HepG2 (cell line): ENCODE measurements at regions of chr20 and their contacts with region 1.

Region 1: DNA sequence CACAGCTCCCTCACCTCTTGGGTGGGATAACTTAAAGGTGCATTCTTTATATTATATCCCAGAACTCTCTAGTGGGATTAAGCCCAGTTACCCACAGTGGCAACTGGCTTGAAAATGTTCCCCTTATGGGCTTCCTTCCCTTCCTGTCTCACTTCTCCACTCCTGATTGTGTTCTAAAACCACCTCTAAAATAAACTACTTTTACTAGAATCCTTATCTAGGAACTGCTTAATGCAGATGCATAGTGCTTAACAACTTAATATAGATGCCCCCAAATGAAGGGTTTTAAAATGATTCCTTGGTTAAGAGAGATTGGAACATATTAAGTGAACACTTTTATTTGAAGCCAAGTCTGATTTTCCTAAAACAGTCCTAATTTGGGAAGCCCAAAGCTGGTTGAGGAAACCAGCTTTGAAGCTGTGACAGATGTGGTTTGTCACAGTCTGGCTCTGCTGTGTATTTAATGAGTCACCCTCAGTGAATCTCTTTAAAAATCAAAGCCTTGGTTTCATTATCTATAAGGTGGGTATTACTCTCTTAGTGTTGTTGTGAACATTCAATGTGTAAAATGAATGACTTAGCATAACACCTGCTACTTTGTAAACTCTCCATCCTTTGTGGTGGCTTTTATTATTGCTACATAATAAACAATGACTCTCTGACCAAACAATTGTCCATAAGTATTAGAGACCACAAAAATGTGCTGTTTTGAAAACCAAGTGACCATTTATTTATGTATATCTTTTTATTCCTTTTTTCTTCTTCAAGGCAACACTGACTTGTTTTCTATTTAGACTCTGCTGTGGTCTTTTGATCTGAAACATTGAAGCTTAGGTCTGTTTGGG is 24.4 kb downstream of the PLCB1 start:
- DNase-seq: peak; percentile 90
- ATAC-seq: peak; percentile 95
- H3K4me3 ChIP-seq: no peak overlapping the region; a peak in 1 of 6 replicates
- H3K27ac ChIP-seq: peak overlapping the region; percentile 59
- H3K4me1 ChIP-seq: peaks cover 54% of the 10 kb centered on the region
- H3K27me3 ChIP-seq: no peaks in the 10 kb centered on the region
- CTCF ChIP-seq: no peak
- EP300 ChIP-seq: peak; percentile 40 to 90; a peak in 2 of 4 replicates
- POLR2A ChIP-seq: no peak
- RAD21 ChIP-seq: no peak

Region 2: GRCh38 chr20:8019246-8019997 is 137.0 kb before region 1 on chr20 and contains the start of gene TMX4:
- CTCF ChIA-PET with region 1: no interaction called
- POLR2A ChIA-PET with region 1: no interaction called
- in situ Hi-C with region 1: no loop called
- intact Hi-C with region 1: no loop called
- DNase-seq: peak; percentile 98
- ATAC-seq: peak; percentile 92
- H3K4me3 ChIP-seq: peak within 1 kb of the TSS; percentile 74 to 89 (median 87)
- H3K27ac ChIP-seq: peak within 1 kb of the TSS; percentile 94
- H3K4me1 ChIP-seq: peaks cover 19% of the 10 kb centered on the region
- H3K27me3 ChIP-seq: no peaks in the 10 kb centered on the region
- CTCF ChIP-seq: peak; percentile 76
- EP300 ChIP-seq: peak; percentile 32 to 85; a peak in 3 of 4 replicates
- POLR2A ChIP-seq: peak; percentile 97 to 99
- RAD21 ChIP-seq: peak; percentile 90
- total RNA-seq, gene TMX4: 15.4 and 21.4 TPM in 2 replicates

Region 3: DNA sequence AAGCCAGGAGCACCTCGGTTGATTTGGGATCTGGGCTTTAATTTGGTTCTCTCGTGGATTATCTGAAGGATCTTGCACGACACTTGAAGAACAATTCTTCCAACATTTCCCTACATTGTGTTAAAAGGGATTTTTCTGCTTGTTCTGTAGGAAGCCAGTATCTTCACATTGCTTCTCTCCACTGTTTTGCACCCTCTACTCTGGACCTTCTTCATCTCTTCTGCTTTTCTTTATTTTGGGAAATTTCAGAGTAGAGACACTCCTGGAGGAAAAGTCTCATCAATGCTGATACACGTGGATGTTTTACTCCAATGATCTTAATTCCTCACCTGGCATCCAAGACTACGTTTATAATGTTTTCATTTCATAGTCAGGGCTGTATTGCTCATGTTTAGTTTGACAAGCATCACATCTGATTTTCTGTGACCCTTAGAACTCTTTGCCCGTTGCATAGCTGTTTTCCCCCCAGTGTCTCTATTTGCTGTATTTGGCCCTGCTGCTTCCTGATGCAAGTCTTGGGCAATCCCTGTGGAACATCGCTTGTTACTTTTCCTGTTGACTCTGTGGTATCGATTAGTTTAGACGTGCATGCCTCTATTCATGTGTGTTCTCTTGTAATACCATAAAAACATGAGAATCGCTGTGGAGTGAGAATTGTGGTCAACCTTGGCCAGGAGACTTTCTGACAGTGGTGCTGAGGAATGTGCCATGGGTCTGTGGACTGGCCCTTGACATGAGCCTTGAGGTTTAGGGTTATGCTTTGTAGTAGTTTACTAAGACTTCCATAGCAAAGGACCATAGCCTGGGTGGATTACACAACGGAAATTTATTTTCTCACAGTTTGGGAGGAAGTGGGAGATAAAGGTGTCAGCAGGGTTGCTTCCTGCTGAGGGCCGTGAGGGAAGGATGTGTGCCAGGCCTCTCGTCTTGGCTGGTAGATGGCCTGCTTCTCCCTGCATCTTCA is 11.9 kb before region 1 on chr20:
- CTCF ChIA-PET with region 1: interaction called, 3 read pairs
- POLR2A ChIA-PET with region 1: interaction called, 28 read pairs
- in situ Hi-C with region 1: no loop called
- intact Hi-C with region 1: loop called (anchors 1 kb)
- DNase-seq: peak; percentile 100
- ATAC-seq: peak; percentile 97
- H3K4me3 ChIP-seq: peak overlapping the region in 1 of 3 experiments; percentile 13; a peak in 1 of 6 replicates
- H3K27ac ChIP-seq: peak overlapping the region; percentile 70
- H3K4me1 ChIP-seq: peaks cover 48% of the 10 kb centered on the region
- H3K27me3 ChIP-seq: no peaks in the 10 kb centered on the region
- CTCF ChIP-seq: peak; percentile 35; the same call in 1 of the 2 replicates
- EP300 ChIP-seq: peak; percentile 98 to 99
- POLR2A ChIP-seq: no peak
- RAD21 ChIP-seq: peak; percentile 46

Region 4: DNA sequence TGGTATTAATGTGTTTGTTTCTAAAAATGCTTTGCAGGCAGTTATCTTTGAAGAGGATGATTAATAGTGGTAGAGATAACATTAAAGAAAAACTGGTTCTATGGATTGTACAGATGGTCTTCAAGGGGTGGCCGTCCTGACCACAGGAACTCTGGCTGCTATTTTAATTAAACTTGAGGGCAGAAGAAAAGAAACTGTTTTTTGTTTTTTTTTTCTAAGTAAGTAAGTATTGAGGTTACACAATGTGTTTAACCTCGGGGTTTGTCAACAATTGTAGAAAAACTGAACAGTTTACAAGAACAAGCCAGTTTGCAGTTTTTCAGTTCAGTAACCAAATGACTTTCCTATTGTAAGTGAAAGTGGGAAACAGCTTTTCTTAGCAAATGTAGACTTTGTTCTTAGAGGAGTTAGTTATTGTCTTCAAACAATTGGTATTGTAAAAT is 52.6 kb after region 1 on chr20:
- CTCF ChIA-PET with region 1: no interaction called
- POLR2A ChIA-PET with region 1: interaction called, 4 read pairs
- in situ Hi-C with region 1: no loop called
- intact Hi-C with region 1: loop called (anchors 1 kb)
- DNase-seq: no peak
- ATAC-seq: no peak
- H3K4me3 ChIP-seq: no peak overlapping the region
- H3K27ac ChIP-seq: no peak overlapping the region
- H3K4me1 ChIP-seq: peaks cover 75% of the 10 kb centered on the region
- H3K27me3 ChIP-seq: no peaks in the 10 kb centered on the region
- CTCF ChIP-seq: no peak
- EP300 ChIP-seq: peak in 1 of 2 experiments; percentile 49; a peak in 1 of 4 replicates
- POLR2A ChIP-seq: no peak
- RAD21 ChIP-seq: no peak

Region 5: GRCh38 chr20:8223091-8223870 is 66.8 kb after region 1 on chr20:
- CTCF ChIA-PET with region 1: no interaction called
- POLR2A ChIA-PET with region 1: no interaction called
- in situ Hi-C with region 1: no loop called
- intact Hi-C with region 1: no loop called
- DNase-seq: peak; percentile 50
- ATAC-seq: no peak
- H3K4me3 ChIP-seq: no peak overlapping the region
- H3K27ac ChIP-seq: no peak overlapping the region
- H3K4me1 ChIP-seq: peaks cover 28% of the 10 kb centered on the region
- H3K27me3 ChIP-seq: no peaks in the 10 kb centered on the region
- CTCF ChIP-seq: no peak
- EP300 ChIP-seq: no peak
- POLR2A ChIP-seq: no peak
- RAD21 ChIP-seq: no peak

Region 6: GRCh38 chr20:8244637-8245036 is 88.2 kb after region 1 on chr20:
- CTCF ChIA-PET with region 1: no interaction called
- POLR2A ChIA-PET with region 1: interaction called, 20 read pairs
- in situ Hi-C with region 1: loop called (anchors 5 kb)
- intact Hi-C with region 1: no loop called
- DNase-seq: peak; percentile 50
- ATAC-seq: peak; percentile 50; the same call in 1 of the 3 replicates
- H3K4me3 ChIP-seq: no peak overlapping the region
- H3K27ac ChIP-seq: no peak overlapping the region
- H3K4me1 ChIP-seq: peaks cover 45% of the 10 kb centered on the region
- H3K27me3 ChIP-seq: no peaks in the 10 kb centered on the region
- CTCF ChIP-seq: no peak
- EP300 ChIP-seq: no peak
- POLR2A ChIP-seq: no peak
- RAD21 ChIP-seq: no peak

Region 7: DNA sequence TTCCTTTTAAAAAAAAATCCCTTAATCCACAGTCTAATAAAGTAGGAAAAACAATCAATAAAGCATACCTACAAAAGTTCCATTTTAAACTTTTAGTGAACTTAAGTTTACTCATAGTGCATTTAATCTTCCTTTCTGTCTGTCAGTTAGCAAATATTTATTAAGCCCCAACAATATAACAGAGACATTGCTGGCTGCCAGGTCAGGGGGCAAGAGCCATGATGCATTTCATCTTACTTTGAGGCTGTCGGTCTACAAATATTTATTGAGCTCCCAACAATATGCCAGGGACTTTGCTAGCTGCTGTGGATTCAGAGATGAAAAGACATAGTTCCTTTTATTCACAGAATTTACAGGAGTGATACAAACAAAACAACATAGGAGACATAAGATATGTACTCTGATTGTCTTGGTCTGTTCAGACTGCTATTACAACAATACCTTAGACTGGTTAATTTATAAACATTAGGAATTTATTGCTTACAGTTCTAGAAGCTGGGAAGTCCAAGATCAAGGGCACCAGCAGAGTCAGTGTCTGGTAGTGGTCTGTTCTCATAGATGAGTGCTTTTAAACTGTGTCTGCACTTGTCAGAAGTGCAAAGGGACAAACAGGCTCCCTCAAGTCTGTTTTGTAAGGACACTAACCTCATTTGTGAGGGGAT is 94.2 kb after region 1 on chr20:
- CTCF ChIA-PET with region 1: no interaction called
- POLR2A ChIA-PET with region 1: interaction called, 20 read pairs
- in situ Hi-C with region 1: no loop called
- intact Hi-C with region 1: no loop called
- DNase-seq: peak; percentile 100
- ATAC-seq: peak; percentile 98
- H3K4me3 ChIP-seq: peak overlapping the region in 2 of 3 experiments; percentile 12 to 19; a peak in 1 of 6 replicates
- H3K27ac ChIP-seq: peak overlapping the region; percentile 58
- H3K4me1 ChIP-seq: peaks cover 73% of the 10 kb centered on the region
- H3K27me3 ChIP-seq: no peaks in the 10 kb centered on the region
- CTCF ChIP-seq: no peak
- EP300 ChIP-seq: peak; percentile 87 to 99; a peak in 3 of 4 replicates
- POLR2A ChIP-seq: no peak
- RAD21 ChIP-seq: no peak

Region 8: DNA sequence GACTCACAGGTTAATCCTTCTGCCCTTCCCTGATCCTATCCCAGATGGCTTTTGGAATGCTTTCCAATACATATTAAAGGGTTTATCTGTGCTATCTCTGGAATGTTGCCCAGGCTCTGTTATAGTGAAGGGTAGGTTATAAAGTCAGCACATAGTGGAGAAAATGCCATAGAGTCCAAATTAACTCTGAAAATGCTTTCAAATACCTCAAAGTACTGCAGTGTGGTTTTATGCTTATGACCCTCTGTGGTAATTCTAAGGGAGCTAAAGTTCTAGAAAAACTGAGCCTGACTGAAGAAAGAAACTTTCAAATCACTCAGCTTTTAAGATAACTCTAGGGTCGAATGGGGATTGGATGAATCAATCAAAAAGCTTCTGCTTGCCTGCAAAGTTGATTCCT is 135.4 kb after region 1 on chr20:
- CTCF ChIA-PET with region 1: no interaction called
- POLR2A ChIA-PET with region 1: no interaction called
- in situ Hi-C with region 1: no loop called
- intact Hi-C with region 1: no loop called
- DNase-seq: no peak
- ATAC-seq: no peak
- H3K4me3 ChIP-seq: no peak overlapping the region
- H3K27ac ChIP-seq: no peak overlapping the region
- H3K4me1 ChIP-seq: peaks cover 23% of the 10 kb centered on the region
- H3K27me3 ChIP-seq: no peaks in the 10 kb centered on the region
- CTCF ChIP-seq: no peak
- EP300 ChIP-seq: no peak
- POLR2A ChIP-seq: no peak
- RAD21 ChIP-seq: no peak